Panc1 (cell line): ENCODE measurements at regions of chr15 and their contacts with region 1.

Region 1: GRCh38 chr15:65993236-65993635 is 123.9 kb downstream of the RAB11A start:
- DNase-seq: no peak
- ATAC-seq: no peak
- H3K4me3 ChIP-seq: no peak overlapping the region
- H3K27ac ChIP-seq: no peak overlapping the region
- H3K4me1 ChIP-seq: no peaks in the 10 kb centered on the region
- H3K27me3 ChIP-seq: peaks cover 10% of the 10 kb centered on the region
- CTCF ChIP-seq: no peak

Region 2: GRCh38 chr15:65494071-65494470 is 499.2 kb before region 1 on chr15:
- CTCF ChIA-PET with region 1: interaction called, 10 read pairs
- POLR2A ChIA-PET with region 1: no interaction called
- in situ Hi-C with region 1: no loop called
- intact Hi-C with region 1: no loop called
- DNase-seq: no peak
- ATAC-seq: no peak
- H3K4me3 ChIP-seq: no peak overlapping the region
- H3K27ac ChIP-seq: no peak overlapping the region
- H3K4me1 ChIP-seq: no peaks in the 10 kb centered on the region
- H3K27me3 ChIP-seq: no peaks in the 10 kb centered on the region
- CTCF ChIP-seq: no peak

Region 3: DNA sequence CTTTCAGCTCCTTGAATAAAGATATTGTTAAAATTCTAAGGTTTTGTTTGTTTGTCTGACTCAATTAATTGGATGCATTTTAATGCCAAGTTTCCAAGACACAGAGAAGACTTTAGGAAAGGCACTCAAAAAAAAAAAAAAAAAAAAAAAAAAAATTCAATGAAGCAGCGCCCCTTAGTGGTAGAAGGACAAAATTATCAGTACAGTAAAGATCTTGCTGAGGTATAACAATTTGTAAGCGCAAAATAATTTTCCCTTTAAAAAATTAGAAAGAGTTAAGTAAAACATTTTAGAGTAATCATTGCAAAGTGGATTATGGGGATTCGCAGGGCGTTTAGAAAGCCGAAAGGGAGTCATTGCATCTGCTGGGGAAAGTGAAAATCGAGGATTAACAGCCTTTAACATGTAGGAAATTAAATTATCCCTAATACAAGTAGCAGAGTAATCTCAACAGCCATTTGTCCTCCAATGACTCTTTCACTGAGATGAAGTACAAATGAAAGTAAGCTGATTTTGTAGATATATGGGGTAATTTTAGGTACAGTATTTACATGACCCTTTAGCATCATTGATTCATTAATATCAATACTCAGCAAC is 294.3 kb after region 1 on chr15:
- CTCF ChIA-PET with region 1: no interaction called
- POLR2A ChIA-PET with region 1: no interaction called
- in situ Hi-C with region 1: no loop called
- intact Hi-C with region 1: loop called (anchors 10 kb)
- DNase-seq: no peak
- ATAC-seq: 0 out of 2 replicates have a peak, but pooled peaks have one; percentile 37
- H3K4me3 ChIP-seq: no peak overlapping the region
- H3K27ac ChIP-seq: no peak overlapping the region
- H3K4me1 ChIP-seq: 0 out of 2 replicates have a peak, but pooled peaks cover 2% of the 10 kb centered on the region
- H3K27me3 ChIP-seq: no peaks in the 10 kb centered on the region
- CTCF ChIP-seq: peak; percentile 64; the same call in 1 of the 2 replicates